ENCODE measurements at regions of chr11 and their contacts with region 1.

Region 1: DNA sequence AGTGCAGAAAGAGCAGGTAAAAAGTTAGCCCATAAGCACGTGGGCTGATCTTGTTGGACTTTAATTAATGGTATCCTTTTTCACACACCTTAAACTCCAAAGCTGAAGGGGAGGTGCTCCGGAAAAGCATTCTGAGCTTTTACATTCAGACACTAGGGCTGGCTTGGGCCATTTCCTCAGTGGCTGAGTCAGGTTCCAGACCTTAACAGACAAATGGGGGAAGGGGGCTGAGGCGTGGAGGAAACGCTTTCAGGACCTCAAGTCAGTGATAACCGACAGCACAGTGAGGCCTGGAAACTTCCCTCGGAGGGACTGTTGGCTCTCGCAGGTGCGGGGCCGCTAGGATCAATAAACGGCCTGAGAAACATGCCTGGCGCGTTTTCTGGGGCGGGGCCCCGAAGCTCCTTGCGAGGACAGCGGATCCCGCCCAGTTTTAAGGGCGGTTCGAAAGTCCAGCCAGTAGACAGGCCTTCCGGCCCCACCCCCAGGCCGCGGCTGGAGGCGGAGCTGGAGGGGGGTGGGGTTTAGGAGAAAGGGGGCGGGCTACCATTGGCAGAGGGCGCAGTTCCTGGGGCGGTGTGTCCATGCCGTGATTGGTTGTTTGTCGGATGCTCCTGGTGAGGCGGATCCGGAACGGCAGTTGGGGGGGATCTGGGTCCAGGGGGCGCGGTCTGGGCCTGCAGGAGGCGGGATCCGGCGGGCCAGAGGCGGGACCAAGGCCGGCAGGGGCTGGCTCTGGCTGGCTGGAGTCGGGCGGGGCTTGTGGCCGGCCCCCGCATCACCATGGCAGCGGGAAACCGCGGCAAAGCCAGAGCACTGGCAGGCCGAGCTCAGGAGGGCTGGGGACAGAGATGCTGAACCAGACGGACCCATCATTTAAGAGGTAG is 8.0 kb downstream of the C11orf52 start:
- DNase-seq: peak; percentile 98
- H3K4me3 ChIP-seq: peak overlapping the region; percentile 38 to 66 (median 38)
- H3K27ac ChIP-seq: peak overlapping the region; percentile 98
- H3K4me1 ChIP-seq: peaks cover 28% of the 10 kb centered on the region
- H3K27me3 ChIP-seq: no peaks in the 10 kb centered on the region
- CTCF ChIP-seq: peak in 1 of 2 donors; percentile 20
- POLR2A ChIP-seq: peak; percentile 88

Region 2: GRCh38 chr11:111761036-111761435 is 165.7 kb before region 1 on chr11:
- CTCF ChIA-PET with region 1: no interaction called
- POLR2A ChIA-PET with region 1: no interaction called
- dilution Hi-C with region 1: no loop called
- intact Hi-C with region 1: no loop called
- DNase-seq: no peak
- H3K4me3 ChIP-seq: no peak overlapping the region
- H3K27ac ChIP-seq: no peak overlapping the region
- H3K4me1 ChIP-seq: peaks cover 9% of the 10 kb centered on the region
- H3K27me3 ChIP-seq: no peaks in the 10 kb centered on the region
- CTCF ChIP-seq: no peak
- POLR2A ChIP-seq: no peak

Region 3: DNA sequence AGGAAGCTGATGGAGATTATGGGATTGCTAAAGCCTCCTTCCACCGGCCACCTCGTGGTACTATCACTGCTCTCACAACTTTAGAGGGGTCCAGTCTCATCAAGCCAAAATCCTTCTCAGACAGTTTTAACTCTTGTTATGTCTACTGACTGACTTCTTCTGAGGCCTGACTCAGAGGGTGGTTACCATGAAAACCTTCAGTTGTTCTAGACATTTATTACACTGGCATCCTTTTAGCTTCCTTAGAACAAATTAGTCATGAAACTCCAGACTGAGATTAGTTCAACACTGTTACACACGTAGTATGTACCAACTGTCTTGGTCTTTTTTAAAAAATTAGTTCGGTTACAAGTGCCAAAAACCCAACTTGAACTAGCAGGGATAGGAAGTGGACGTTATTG is 17.9 kb after region 1 on chr11:
- CTCF ChIA-PET with region 1: interaction called, 11 read pairs
- POLR2A ChIA-PET with region 1: interaction called, 4 read pairs
- dilution Hi-C with region 1: no loop called
- intact Hi-C with region 1: loop called (anchors 1 kb)
- DNase-seq: peak; percentile 96
- H3K4me3 ChIP-seq: no peak overlapping the region
- H3K27ac ChIP-seq: peak overlapping the region; percentile 89
- H3K4me1 ChIP-seq: peaks cover 48% of the 10 kb centered on the region
- H3K27me3 ChIP-seq: no peaks in the 10 kb centered on the region
- CTCF ChIP-seq: no peak
- POLR2A ChIP-seq: no peak

Region 4: DNA sequence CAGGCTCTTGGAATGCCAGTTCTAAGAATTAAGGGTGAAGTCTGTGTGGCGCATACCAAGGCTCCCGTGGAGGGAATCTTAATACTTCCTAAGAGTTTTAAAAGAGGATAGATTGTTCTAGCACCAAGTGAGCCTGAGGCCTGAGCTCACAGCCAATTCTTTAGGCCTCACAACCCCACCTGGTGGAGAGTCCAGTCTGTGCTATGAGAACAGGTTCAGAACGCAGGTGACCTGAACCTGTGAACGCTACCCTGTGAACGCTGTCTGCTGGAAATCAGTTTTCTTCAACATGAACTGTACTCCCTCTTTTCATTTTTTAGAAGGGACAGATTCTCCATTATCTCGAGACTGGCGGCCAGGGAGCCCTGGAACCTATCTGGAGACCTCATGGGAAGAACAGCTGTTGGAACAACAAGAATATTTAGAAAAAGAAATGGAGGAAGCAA is 55.3 kb after region 1 on chr11:
- CTCF ChIA-PET with region 1: interaction called, 407 read pairs
- POLR2A ChIA-PET with region 1: no interaction called
- dilution Hi-C with region 1: no loop called
- intact Hi-C with region 1: loop called (anchors 1 kb)
- DNase-seq: peak; percentile 59
- H3K4me3 ChIP-seq: no peak overlapping the region
- H3K27ac ChIP-seq: no peak overlapping the region
- H3K4me1 ChIP-seq: peaks cover 16% of the 10 kb centered on the region
- H3K27me3 ChIP-seq: no peaks in the 10 kb centered on the region
- CTCF ChIP-seq: peak; percentile 55 to 73
- POLR2A ChIP-seq: no peak

Region 5: DNA sequence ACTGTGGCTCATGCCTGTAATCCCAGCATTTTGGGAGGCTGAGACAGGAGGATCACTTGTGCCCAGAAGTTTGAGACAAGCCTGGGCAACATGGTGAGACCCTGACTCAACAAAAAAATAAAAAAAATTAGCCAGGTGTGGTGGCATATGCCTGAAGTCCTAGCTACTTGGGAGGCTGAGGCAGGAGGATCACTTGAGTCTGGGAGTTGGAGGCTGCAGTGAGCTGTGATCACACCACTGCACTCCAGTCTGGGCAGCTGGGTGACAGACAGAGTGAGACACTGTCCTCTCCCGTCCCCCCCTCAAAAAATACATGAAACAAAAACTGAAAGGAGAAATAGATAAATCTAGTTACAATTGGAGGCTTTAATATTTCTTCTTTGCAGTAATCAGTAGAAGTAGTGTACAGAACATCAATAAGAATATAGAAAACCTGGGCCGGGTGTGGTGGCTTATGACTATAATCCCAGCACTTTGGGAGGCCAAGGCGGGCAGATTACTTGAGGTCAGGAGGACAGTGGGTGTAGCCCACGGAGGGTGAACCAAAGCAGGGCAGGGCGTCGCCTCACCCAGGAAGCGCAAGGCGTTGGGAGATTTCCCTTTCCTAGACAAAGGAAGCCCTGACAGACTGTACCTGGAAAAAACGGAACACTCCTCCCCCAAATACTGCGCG is 78.8 kb after region 1 on chr11:
- CTCF ChIA-PET with region 1: no interaction called
- POLR2A ChIA-PET with region 1: no interaction called
- dilution Hi-C with region 1: no loop called
- intact Hi-C with region 1: no loop called
- DNase-seq: no peak
- H3K4me3 ChIP-seq: no peak overlapping the region
- H3K27ac ChIP-seq: no peak overlapping the region
- H3K4me1 ChIP-seq: no peaks in the 10 kb centered on the region
- H3K27me3 ChIP-seq: no peaks in the 10 kb centered on the region
- CTCF ChIP-seq: no peak
- POLR2A ChIP-seq: no peak

Region 6: GRCh38 chr11:112086422-112087191 is 159.9 kb after region 1 on chr11 and contains the starts of genes SDHD and TIMM8B:
- CTCF ChIA-PET with region 1: no interaction called
- POLR2A ChIA-PET with region 1: no interaction called
- dilution Hi-C with region 1: no loop called
- intact Hi-C with region 1: loop called (anchors 1 kb)
- DNase-seq: peak; percentile 98
- H3K4me3 ChIP-seq: peak within 1 kb of the TSS; percentile 54 to 90 (median 86)
- H3K27ac ChIP-seq: peak within 1 kb of the TSS; percentile 54
- H3K4me1 ChIP-seq: peaks cover 13% of the 10 kb centered on the region
- H3K27me3 ChIP-seq: no peaks in the 10 kb centered on the region
- CTCF ChIP-seq: peak; percentile 17 to 62
- POLR2A ChIP-seq: peak; percentile 52
- total RNA-seq, gene SDHD: 72.3 and 79.0 TPM in 2 replicates
- total RNA-seq, gene TIMM8B: 64.1 and 77.0 TPM in 2 replicates

Measured in endothelial cell of umbilical vein (primary cell).